Activated T-helper 1 cell treated with anti-CD3 and anti-CD28 coated beads, Interleukin-12 subunit alpha, Interleukin-12 subunit beta, Interleukin-2, Interleukin-4 antibody, amounts not matched to agents 30 ng/mL and 10 ng/mL and 1 ng/mL, durations not matched to agents 14 hours and 24 hours and 36 hours (primary cell): ENCODE measurements at regions of chr3 and their contacts with region 1.

Region 1: DNA sequence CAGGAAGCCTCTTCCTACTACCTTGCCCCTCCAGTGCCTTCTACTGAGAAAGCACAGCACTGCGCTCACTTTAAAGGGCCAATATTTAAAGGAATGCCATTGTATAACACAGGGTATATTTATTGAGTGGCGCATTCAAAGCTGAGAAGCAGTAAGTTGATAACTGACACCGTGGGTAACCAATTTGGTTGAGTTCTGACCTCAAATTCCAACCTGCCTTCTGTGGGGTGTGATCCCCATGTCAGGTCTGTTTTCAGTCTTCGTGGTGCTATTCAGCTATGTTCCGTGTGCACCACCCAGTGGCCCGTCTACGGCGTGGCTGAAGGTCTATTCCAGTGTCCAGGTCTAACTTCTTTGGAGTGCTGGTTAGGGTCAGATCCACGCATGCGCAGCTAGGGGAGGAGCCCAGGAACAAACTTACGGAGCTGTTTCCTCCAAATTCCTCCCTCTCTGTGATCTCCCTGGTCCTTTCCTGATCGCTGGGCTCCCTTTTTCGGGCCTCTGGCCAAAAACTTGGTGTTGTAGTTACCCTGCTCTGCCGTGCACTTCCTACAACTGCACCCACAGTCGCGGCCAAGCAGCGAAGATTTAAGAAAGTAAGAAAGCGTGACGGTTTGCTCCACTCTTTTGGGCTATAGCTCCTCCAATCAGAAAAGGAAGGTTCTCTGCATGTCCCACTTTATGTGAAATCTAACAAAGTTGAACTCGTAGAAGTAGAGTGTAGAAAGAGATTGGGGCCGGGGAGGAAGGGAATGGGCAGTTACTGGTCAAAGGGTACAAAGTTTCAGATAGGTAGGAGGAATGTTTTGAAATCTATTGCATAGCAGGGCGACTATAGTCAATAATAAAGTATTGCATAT is 7.7 kb downstream of the LRRC2 start:
- DNase-seq: peak; percentile 57
- H3K4me3 Mint-ChIP-seq: peak overlapping the region; percentile 82
- H3K27ac Mint-ChIP-seq: no peak overlapping the region
- H3K4me1 Mint-ChIP-seq: peaks cover 13% of the 10 kb centered on the region
- H3K27me3 Mint-ChIP-seq: peaks cover 44% of the 10 kb centered on the region

Region 2: DNA sequence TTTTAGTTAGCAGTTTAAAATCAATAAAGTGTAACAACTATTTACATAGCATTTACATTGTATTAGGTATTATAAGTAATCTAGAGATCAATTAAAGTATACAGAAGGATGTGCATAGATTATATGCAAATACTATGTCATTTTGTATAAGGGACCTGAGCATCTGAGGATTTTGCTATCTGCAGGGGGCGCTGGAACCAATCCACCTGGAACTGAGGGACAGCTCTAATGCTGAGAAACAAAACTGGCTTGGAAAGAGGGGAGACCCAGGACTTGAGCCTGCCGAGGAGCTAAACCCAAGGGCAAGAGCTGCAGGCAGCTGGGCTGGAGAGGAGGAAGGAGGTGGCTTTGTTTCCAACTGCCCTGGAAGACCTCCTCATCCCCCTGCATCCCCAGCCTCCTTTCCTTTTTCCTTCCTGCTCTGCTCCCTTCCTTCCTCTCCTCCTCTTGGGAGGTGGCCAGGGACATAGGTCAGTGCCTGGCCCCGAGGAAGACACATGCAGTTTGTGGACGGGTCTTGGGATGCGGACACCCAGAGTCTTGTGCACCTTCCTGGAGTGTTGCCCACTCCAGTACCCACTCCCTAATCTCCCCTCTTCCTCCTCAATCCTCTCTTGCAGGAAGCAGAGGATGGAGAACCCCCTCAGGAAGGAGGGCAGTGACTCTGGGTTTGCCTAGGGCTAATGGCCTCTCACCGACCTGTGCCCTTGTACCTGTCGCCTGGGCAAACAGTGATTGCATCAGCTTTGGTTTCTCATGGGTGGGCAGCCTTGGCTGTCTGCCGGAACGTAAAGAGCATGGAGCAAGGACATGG is 61.5 kb before region 1 on chr3:
- intact Hi-C with region 1: loop called (anchors 2 kb)
- DNase-seq: no peak
- H3K4me3 Mint-ChIP-seq: no peak overlapping the region
- H3K27ac Mint-ChIP-seq: no peak overlapping the region
- H3K4me1 Mint-ChIP-seq: peaks cover 5% of the 10 kb centered on the region
- H3K27me3 Mint-ChIP-seq: peaks cover 3% of the 10 kb centered on the region